Sciatic nerve (tissue), 2 donors: ENCODE measurements at regions of chr1 and their contacts with region 1.

Region 1: GRCh38 chr1:38433084-38433722 is 386.6 kb upstream of the POU3F1 start:
- DNase-seq: no peak
- ATAC-seq: no peak

Region 2: DNA sequence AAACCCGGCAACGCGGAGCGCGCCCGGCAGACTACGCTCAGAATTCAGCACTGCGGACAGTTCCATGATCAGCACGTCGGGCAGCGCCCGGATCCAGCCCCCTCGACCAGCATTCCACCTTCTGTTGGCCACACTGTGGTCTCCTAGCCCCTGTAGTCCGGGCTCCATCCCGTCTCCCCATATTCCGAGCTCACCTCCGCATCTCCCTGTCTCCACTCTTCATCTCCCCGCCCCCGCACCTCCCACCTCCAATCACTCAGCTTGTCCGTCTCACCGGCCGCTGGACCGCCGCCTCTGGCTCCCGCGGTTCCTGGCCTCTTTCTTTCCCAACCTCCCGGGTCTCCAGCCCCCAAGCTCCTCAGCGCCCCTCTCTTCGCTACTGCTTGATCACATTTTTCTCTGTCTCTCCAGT is 668.8 kb before region 1 on chr1:
- intact Hi-C with region 1: no loop called
- DNase-seq: no peak
- ATAC-seq: no peak

Region 3: DNA sequence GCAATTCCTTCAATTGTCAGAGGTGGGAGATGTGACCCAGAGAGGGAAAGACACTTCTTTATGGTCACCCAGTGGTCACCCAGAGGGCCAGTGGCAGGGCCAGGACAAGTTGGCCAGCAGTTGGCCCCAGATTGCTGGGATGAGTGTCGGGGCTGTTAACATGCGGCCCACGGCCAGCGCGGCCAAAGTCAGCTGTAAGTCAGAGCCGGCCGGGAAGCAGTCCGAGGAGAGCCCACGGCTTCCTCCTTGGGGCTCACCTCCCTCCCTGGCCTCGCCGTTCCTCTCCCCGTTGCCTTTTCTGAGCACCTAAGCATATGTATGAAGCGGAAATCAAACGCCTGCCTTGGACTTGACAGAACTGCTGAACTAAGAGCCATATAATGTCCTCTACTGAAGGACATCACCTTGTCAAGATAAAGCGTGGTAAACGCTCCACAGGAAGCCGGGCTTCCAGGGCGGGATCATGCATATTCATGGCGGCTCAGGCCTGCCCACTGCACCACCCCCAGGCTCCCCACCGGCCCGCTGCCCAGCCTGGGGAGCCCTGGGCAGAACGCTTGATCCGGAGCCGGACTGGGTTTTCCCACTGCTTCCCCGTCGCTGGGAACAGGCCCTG is 141.2 kb before region 1 on chr1:
- intact Hi-C with region 1: no loop called
- DNase-seq: no peak
- ATAC-seq: peak; percentile 32

Region 4: GRCh38 chr1:38624336-38625039 is 191.3 kb after region 1 on chr1:
- intact Hi-C with region 1: no loop called
- DNase-seq: no peak
- ATAC-seq: no peak

Region 5: GRCh38 chr1:39332291-39332690 is 899.1 kb after region 1 on chr1:
- intact Hi-C with region 1: loop called (anchors 5 kb)
- DNase-seq: no peak
- ATAC-seq: no peak